Left cardiac atrium (tissue), 4 donors: ENCODE measurements at regions of chr18 and their contacts with region 1.

Region 1: DNA sequence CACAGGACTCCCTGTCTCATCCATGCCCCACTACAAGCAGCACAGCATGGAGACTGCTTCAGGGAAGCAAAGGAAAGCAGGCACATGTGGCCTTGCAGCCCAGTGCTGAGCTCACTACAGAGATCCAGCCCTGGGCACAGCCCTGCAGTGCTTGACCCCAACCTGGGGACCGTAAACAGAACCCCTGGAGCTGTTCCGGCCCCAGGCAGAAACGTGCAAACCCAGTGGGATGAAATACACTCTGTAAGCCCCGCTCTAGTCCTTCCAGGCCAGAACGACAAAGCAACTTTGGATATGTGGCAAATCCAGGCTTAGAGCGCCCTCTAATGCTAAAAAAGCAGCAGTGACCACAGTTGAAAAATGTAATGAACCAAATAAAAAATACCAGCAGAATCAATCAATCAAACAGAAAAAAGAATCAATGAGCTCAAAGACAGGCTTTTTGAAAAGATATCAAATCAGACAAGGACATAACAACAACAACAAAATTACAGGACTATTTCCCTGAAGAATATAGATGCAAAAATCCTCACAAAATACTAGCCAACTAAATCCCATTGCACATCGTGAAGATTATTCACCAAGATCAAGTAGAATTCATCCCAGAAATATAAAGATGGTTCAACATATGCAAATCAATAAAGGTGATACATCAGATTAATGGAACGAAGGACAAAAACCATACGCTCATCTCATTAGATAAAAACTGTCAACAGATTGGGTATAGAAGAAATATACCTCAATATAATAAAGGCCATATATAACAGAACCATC is 45.6 kb downstream of the ZNF519 start:
- DNase-seq: no peak
- ATAC-seq: peak in 1 of 2 donors; percentile 56

Region 2: GRCh38 chr18:13813271-13813849 is 273.3 kb before region 1 on chr18:
- intact Hi-C with region 1: no loop called
- DNase-seq: peak; percentile 44
- ATAC-seq: peak; percentile 83 to 87

Region 3: GRCh38 chr18:13823707-13824395 is 262.8 kb before region 1 on chr18 and contains the start of gene MC5R:
- intact Hi-C with region 1: loop called in 1 of 2 experiments (anchors 2 kb)
- DNase-seq: peak; percentile 70
- ATAC-seq: peak; percentile 88 to 94
- total RNA-seq, gene MC5R: not detected

Region 4: GRCh38 chr18:13831864-13832508 is 254.7 kb before region 1 on chr18:
- intact Hi-C with region 1: loop called in 1 of 2 experiments (anchors 5 kb)
- DNase-seq: no peak
- ATAC-seq: no peak